GM12878 (cell line): ENCODE measurements at regions of chr7 and their contacts with region 1.

Region 1: GRCh38 chr7:55572378-55573233 is at the start of gene VOPP1:
- DNase-seq: no peak
- ATAC-seq: peak; percentile 20
- H3K4me3 ChIP-seq: peak within 1 kb of the TSS; percentile 98
- H3K27ac ChIP-seq: peak within 1 kb of the TSS; percentile 93
- H3K4me1 ChIP-seq: peaks cover 22% of the 10 kb centered on the region
- H3K27me3 ChIP-seq: no peaks in the 10 kb centered on the region
- CTCF ChIP-seq: no peak
- EP300 ChIP-seq: no peak
- POLR2A ChIP-seq: peak; percentile 63
- RAD21 ChIP-seq: no peak
- polyA plus RNA-seq, gene VOPP1: 32.8 to 78.5 TPM

Region 2: DNA sequence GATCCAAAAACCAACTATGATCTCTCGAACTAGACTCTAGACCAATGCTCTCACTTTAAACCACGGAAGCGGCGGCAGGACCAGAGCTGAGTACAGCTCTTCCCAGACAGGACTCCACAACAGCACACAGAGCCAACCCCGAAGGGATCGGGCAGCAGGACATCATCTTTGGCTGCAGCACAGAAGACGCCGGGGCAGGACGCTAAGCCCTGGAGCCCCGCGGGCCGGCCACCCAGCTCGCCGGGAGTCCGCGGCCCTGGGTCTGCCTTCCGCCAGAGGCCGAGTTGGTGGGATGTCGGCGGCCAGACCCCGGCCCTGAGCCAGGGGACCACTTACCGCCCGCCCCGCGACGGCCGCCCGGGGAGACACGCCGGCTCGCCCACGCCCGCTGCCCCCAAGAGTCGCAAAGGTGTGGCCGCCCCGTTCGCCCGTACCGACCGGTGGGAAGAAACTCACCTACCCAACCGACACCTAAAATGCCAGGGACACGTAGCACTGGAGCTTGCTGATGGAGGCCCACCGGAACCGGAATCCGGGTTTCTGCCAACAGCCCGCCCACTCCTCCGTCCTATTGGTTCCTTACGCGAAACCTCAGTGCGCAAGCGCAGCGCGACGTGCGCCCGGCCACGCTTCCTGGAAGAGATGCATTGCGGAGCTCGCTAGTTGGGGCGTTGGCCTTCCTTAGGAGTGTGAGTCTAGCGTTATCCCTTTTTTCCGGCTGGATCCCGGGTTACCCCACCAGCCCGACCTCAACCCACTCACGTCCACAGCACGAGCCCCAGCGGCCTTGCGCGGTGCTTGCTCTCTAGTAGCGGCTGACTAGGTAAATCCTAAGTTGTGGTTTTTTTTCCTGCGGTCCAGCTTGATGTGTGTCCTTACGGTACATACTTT is 813.7 kb before region 1 on chr7 and contains the start of gene SEC61G:
- CTCF ChIA-PET with region 1: no interaction called
- POLR2A ChIA-PET with region 1: no interaction called
- RAD21 ChIA-PET with region 1: no interaction called
- SMC1A ChIA-PET with region 1: no interaction called
- in situ Hi-C with region 1: loop called (anchors 25 kb)
- intact Hi-C with region 1: no loop called
- DNase-seq: peak; percentile 90
- ATAC-seq: peak; percentile 96
- H3K4me3 ChIP-seq: peak within 1 kb of the TSS; percentile 97
- H3K27ac ChIP-seq: peak within 1 kb of the TSS; percentile 78
- H3K4me1 ChIP-seq: no peaks in the 10 kb centered on the region
- H3K27me3 ChIP-seq: no peaks in the 10 kb centered on the region
- CTCF ChIP-seq: no peak
- EP300 ChIP-seq: no peak
- POLR2A ChIP-seq: peak; percentile 92
- RAD21 ChIP-seq: no peak
- polyA plus RNA-seq, gene SEC61G: 709 to 809 TPM

Region 3: GRCh38 chr7:55365675-55366460 is 206.7 kb before region 1 on chr7:
- CTCF ChIA-PET with region 1: no interaction called
- POLR2A ChIA-PET with region 1: no interaction called
- RAD21 ChIA-PET with region 1: no interaction called
- SMC1A ChIA-PET with region 1: no interaction called
- in situ Hi-C with region 1: no loop called
- intact Hi-C with region 1: loop called (anchors 1 kb)
- DNase-seq: peak; percentile 79
- ATAC-seq: peak; percentile 90
- H3K4me3 ChIP-seq: peak overlapping the region; percentile 99
- H3K27ac ChIP-seq: peak overlapping the region; percentile 91
- H3K4me1 ChIP-seq: peaks cover 9% of the 10 kb centered on the region
- H3K27me3 ChIP-seq: no peaks in the 10 kb centered on the region
- CTCF ChIP-seq: peak in 2 of 3 experiments; percentile 30 to 32; a peak in 3 of 6 replicates
- EP300 ChIP-seq: peak in 1 of 2 experiments; percentile 22; a peak in 1 of 4 replicates
- POLR2A ChIP-seq: peak; percentile 93
- RAD21 ChIP-seq: peak; percentile 31; the same call in 1 of the 2 replicates

Region 4: GRCh38 chr7:55515569-55516279 is 56.9 kb before region 1 on chr7:
- CTCF ChIA-PET with region 1: interaction called, 7 read pairs
- POLR2A ChIA-PET with region 1: interaction called, 3 read pairs
- RAD21 ChIA-PET with region 1: interaction called, 79 read pairs
- SMC1A ChIA-PET with region 1: interaction called, 74 read pairs
- in situ Hi-C with region 1: no loop called
- intact Hi-C with region 1: no loop called
- DNase-seq: no peak
- ATAC-seq: peak; percentile 51
- H3K4me3 ChIP-seq: peak overlapping the region; percentile 56; the same call in 1 of the 2 replicates
- H3K27ac ChIP-seq: peak overlapping the region; percentile 62
- H3K4me1 ChIP-seq: peaks cover 69% of the 10 kb centered on the region
- H3K27me3 ChIP-seq: no peaks in the 10 kb centered on the region
- CTCF ChIP-seq: no peak
- EP300 ChIP-seq: 0 out of 4 replicates have a peak, but pooled peaks of 1 of the 2 experiments have one; percentile 16
- POLR2A ChIP-seq: peak; percentile 60
- RAD21 ChIP-seq: no peak

Region 5: DNA sequence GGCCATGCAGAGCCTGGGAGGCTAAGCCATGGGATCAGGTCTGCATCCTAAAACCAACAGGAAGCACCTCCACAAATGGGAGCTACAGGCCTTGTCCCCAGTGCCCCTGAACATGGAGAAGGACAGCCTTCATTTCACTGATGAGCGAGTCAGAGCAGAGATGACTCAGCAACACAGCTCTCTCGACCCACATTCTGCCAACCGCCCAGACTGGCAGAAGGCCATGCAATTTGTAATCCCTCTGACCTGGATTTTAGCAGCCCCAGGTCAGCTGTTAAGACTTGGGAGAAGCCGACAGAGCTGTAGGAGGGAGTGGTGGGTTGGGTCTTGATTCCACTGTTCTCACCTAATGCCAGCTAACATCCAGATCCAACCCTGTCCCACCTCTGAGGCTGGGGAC is 25.8 kb before region 1 on chr7:
- CTCF ChIA-PET with region 1: interaction called, 35 read pairs
- POLR2A ChIA-PET with region 1: interaction called, 21 read pairs
- RAD21 ChIA-PET with region 1: interaction called, 87 read pairs
- SMC1A ChIA-PET with region 1: interaction called, 263 read pairs
- in situ Hi-C with region 1: no loop called
- intact Hi-C with region 1: no loop called
- DNase-seq: no peak
- ATAC-seq: peak; percentile 64
- H3K4me3 ChIP-seq: peak overlapping the region; percentile 22; the same call in 1 of the 2 replicates
- H3K27ac ChIP-seq: peak overlapping the region; percentile 82
- H3K4me1 ChIP-seq: peaks cover 72% of the 10 kb centered on the region
- H3K27me3 ChIP-seq: no peaks in the 10 kb centered on the region
- CTCF ChIP-seq: no peak
- EP300 ChIP-seq: no peak
- POLR2A ChIP-seq: no peak
- RAD21 ChIP-seq: no peak

Region 6: DNA sequence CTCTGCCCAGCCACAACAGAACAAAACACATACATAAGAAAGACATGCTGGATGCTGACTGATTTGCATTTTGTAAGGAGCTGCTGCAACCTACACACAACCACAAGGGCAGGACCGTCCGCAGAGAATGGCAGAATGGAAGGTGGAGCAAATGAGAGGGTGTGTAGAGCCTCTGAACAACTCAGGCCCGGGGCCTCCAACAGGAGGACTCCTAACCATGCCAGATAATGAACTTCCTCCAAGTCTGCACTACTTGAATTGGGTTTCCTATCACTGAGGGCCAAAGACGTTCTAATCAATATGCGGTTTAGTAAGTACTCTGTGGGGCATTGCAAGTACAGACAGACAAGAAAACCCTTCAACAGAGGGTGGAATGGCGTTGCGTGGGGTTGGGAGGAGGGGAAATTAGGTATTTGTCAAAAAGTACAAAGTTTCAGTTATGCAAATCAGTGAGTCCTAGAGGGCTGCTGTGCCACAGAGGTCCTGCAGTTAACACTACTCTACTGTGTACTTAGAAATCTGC is 14.9 kb before region 1 on chr7:
- CTCF ChIA-PET with region 1: interaction called, 28 read pairs
- POLR2A ChIA-PET with region 1: interaction called, 35 read pairs
- RAD21 ChIA-PET with region 1: interaction called, 34 read pairs
- SMC1A ChIA-PET with region 1: interaction called, 90 read pairs
- in situ Hi-C with region 1: no loop called
- intact Hi-C with region 1: loop called (anchors 1 kb)
- DNase-seq: peak; percentile 85
- ATAC-seq: peak; percentile 87
- H3K4me3 ChIP-seq: peak overlapping the region; percentile 70
- H3K27ac ChIP-seq: peak overlapping the region; percentile 57
- H3K4me1 ChIP-seq: peaks cover 82% of the 10 kb centered on the region
- H3K27me3 ChIP-seq: no peaks in the 10 kb centered on the region
- CTCF ChIP-seq: peak in 2 of 3 experiments; percentile 7 to 12; a peak in 1 of 6 replicates
- EP300 ChIP-seq: peak; percentile 32 to 54; a peak in 3 of 4 replicates
- POLR2A ChIP-seq: peak; percentile 57
- RAD21 ChIP-seq: no peak

Region 7: DNA sequence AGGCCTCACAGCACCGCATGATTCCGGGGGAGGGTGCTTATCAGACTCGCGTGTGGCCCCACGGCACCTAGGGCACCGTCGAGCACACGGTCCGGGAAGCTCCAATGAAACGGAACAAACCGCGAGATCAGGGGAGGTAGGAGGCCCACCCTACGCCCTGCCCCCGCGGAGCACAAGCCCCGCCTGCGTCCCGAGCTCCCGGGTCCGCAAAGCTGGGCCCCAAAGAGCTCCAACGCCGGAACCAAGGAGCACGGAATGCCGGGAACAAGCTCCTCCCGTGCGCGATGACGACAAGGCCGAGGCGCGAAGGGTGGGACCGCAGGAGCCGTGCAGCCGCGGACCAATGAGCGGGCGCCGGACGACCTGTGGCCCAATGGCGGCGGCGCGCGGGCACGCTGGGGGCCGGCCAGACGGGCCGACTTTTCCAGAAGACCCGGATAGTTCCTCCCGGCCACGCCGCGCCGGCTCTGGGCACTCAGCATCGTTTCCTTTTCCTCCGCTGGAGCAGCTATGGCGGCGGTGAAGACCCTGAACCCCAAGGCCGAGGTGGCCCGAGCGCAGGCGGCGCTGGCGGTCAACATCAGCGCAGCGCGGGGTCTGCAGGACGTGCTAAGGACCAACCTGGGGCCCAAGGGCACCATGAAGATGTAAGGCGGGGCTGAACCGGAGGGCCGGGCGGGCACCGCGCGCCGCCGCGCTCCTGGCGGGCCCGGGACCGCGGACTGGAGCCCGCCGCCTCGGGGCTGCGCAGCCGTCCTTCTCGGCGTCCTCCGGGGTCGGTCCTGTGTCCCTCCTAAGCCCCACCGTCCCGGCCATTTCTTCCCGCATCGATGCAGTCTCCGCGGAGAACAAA is 479.0 kb after region 1 on chr7 and contains the starts of genes CCT6A and PSPH:
- CTCF ChIA-PET with region 1: no interaction called
- POLR2A ChIA-PET with region 1: no interaction called
- RAD21 ChIA-PET with region 1: no interaction called
- SMC1A ChIA-PET with region 1: no interaction called
- in situ Hi-C with region 1: no loop called
- intact Hi-C with region 1: loop called (anchors 5 kb)
- DNase-seq: peak; percentile 87
- ATAC-seq: peak; percentile 94
- H3K4me3 ChIP-seq: peak within 1 kb of the TSS; percentile 86
- H3K27ac ChIP-seq: peak within 1 kb of the TSS; percentile 83
- H3K4me1 ChIP-seq: peaks cover 14% of the 10 kb centered on the region
- H3K27me3 ChIP-seq: no peaks in the 10 kb centered on the region
- CTCF ChIP-seq: no peak
- EP300 ChIP-seq: no peak
- POLR2A ChIP-seq: peak; percentile 91
- RAD21 ChIP-seq: no peak
- polyA plus RNA-seq, gene CCT6A: 191 to 319 TPM
- polyA plus RNA-seq, gene PSPH: 5.2 to 10.5 TPM